ENCODE measurements at regions of chr10 and their contacts with region 1.

Region 1: DNA sequence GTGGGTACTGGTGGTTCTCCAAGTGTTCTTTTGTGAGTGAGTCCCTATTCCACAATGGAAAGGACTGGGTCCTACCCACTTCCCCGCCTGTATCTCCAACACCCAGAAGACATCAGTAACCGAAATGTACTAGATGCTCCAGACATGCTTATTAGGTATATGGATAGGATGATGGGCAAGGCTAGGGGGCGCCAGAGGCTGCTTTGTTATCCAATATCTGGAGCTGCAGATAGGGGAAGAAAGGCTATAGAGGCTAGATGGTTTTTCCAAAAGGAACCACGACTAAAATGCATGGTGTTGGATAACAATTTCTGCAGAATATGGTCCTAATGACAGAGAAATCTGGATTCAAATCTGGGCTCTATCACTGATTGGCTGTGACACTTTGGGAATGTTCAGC is 56.2 kb upstream of the TM9SF3 start:
- DNase-seq: peak in 41 of 42 donors; percentile 28 to 80 (median 70)

Region 2: DNA sequence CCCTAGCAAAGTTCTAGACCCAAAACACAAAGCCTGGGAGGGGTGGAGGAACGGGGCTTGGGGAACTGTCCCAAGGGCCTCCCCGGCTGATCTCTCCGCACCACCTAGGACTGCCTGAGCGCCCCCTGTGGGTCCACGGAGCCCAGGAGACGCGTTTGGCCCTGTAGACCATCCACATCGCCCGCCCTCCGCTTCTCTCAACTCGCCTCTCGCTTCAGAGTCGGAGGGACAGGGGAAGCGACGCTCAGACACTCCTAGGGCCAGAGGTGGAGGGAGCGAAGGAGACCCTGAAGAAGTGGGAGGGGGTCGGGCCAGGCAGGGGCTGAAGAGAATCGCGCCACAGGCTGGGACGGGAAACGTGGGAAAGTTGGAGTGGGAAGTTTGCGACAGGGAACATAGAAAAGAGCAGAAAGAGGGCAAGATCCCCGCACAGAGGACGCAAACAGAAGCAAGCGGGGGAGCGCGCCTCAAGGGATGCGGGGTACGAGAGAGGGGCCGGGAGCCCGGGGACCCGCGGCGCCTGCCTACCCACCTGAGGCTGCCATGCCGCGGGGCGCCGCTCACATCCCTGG is 77.0 kb after region 1 on chr10:
- intact Hi-C with region 1: loop called (anchors 10 kb)
- DNase-seq: peak in 33 of 42 donors; percentile 7 to 69 (median 47)

Region 3: GRCh38 chr10:96826438-96826837 is 183.5 kb after region 1 on chr10:
- intact Hi-C with region 1: loop called (anchors 10 kb)
- DNase-seq: no peak

Region 4: GRCh38 chr10:97916586-97916985 is 1273.6 kb after region 1 on chr10:
- intact Hi-C with region 1: no loop called
- DNase-seq: peak in 37 of 42 donors; percentile 7 to 85 (median 53)

Measured in head of caudate nucleus (tissue), 42 donors.